B cell (primary cell): ENCODE measurements at regions of chr22 and their contacts with region 1.

Region 1: GRCh38 chr22:49970528-49971231 is 10.1 kb downstream of the PIM3 start:
- DNase-seq: peak; percentile 95
- ATAC-seq: peak; percentile 85
- H3K4me3 ChIP-seq: peak overlapping the region in 4 of 5 experiments; percentile 41 to 65 (median 55)
- H3K4me3 Mint-ChIP-seq: peak overlapping the region; percentile 84
- H3K27ac ChIP-seq: peak overlapping the region in 1 of 2 donors; percentile 40
- H3K27ac Mint-ChIP-seq: peak overlapping the region; percentile 96
- H3K4me1 ChIP-seq: peaks cover 43 to 56% of the 10 kb centered on the region in 2 donors
- H3K4me1 Mint-ChIP-seq: peaks cover 40% of the 10 kb centered on the region
- H3K27me3 ChIP-seq: no peaks in the 10 kb centered on the region
- H3K27me3 Mint-ChIP-seq: no peaks in the 10 kb centered on the region
- CTCF ChIP-seq: no peak

Region 2: DNA sequence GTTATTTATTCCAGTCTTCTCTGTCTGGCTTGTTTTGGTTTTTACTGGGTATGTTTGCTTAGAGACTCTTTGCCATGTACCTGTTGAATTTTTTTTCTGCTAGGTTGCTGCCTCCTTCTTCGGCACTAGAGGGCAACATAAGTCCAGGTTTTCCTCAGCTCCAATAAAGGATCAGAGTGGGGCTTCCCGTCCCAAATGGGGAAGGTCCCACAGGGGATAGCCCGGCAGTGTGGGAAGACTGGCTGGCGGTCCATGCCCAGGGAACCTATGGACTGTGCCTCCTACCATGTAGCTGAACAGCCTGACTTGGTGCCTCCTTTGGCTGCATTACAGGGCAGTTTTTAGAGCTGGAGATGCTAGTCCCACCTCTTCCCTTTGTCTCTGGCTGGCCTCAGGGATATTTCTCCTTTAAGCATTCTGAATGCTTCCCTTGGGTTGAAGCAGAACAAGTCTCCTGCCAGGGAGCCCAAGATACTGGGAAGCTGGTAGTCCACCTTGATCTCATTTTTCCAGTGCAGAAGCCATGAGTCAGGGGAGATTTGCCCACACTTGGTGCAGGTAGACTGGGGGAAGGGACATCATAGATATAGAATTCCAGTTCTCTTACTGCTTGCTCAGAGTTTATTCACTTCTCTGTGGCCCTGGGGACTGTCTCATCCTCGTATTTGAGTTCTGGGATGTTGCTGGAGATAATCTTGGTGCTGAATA is 203.2 kb before region 1 on chr22:
- CTCF ChIA-PET with region 1: no interaction called
- POLR2A ChIA-PET with region 1: no interaction called
- intact Hi-C with region 1: loop called (anchors 5 kb)
- DNase-seq: peak; percentile 65
- ATAC-seq: peak; percentile 59
- H3K4me3 ChIP-seq: no peak overlapping the region
- H3K4me3 Mint-ChIP-seq: no peak overlapping the region
- H3K27ac ChIP-seq: no peak overlapping the region
- H3K27ac Mint-ChIP-seq: no peak overlapping the region
- H3K4me1 ChIP-seq: no peaks in the 10 kb centered on the region
- H3K4me1 Mint-ChIP-seq: peaks cover 4% of the 10 kb centered on the region
- H3K27me3 ChIP-seq: no peaks in the 10 kb centered on the region
- H3K27me3 Mint-ChIP-seq: no peaks in the 10 kb centered on the region
- CTCF ChIP-seq: peak; percentile 79

Region 3: GRCh38 chr22:49852898-49853894 is 117.5 kb before region 1 on chr22 and contains the start of gene ZBED4:
- CTCF ChIA-PET with region 1: no interaction called
- POLR2A ChIA-PET with region 1: no interaction called
- intact Hi-C with region 1: loop called (anchors 5 kb)
- DNase-seq: peak; percentile 99
- ATAC-seq: peak; percentile 88
- H3K4me3 ChIP-seq: peak within 1 kb of the TSS; percentile 66 to 81 (median 77)
- H3K4me3 Mint-ChIP-seq: peak within 1 kb of the TSS; percentile 87
- H3K27ac ChIP-seq: peak within 1 kb of the TSS; percentile 73 to 90
- H3K27ac Mint-ChIP-seq: peak within 1 kb of the TSS; percentile 93
- H3K4me1 ChIP-seq: peaks cover 31 to 44% of the 10 kb centered on the region in 2 donors
- H3K4me1 Mint-ChIP-seq: peaks cover 43% of the 10 kb centered on the region
- H3K27me3 ChIP-seq: peaks cover 0 to 25% (median 14%) of the 10 kb centered on the region in 4 experiments
- H3K27me3 Mint-ChIP-seq: peaks cover 16% of the 10 kb centered on the region
- CTCF ChIP-seq: no peak
- total RNA-seq, gene ZBED4: 14.6 and 14.7 TPM in 2 replicates

Region 4: DNA sequence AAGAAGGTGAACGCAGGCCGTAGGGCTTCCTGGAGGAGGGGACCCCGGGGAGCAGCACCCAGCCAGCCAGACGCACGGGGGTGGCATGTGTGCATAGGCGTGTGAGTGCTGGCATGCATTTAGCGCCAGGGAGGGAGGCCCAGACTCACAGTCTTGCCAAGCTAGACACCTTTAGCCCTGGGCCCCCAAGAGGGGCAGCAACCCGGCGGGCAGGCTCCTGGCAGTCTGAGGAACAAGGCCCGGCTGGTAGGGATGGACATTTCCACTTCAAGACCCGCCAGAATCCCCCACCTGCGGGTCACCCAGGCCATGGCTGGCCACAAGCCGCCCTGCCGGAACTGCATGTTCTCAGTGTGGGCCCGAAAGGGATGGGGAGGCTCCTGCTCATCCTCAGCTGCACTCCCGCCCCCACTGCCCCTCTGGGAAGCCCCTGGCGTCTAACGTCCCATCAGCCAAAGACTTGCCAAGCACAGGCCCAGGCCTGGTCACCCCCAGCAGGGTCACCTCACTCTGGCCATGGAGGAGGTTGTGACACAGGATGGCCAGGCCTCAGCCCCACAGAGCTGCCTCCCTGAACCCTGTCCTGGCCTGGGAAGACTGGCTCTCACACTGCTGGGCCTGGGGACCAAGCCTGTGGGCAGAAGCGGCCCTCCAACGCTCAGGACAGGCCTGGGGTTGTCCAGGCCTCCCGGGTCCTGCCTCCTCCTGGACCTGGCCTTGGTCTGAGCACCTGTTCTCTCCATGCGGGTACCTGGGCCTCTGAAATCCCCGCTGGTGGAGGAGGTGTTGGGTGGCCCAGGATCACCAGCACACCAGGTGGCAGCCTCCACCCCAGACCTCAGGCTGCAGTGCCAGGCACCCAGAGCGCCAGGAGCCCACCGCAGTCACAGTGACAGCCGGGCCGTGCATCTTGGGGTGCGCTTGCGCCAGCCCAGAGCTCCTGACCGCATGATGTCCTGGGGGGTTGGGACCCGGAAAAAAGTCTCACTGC is 26.5 kb before region 1 on chr22:
- CTCF ChIA-PET with region 1: no interaction called
- POLR2A ChIA-PET with region 1: no interaction called
- intact Hi-C with region 1: no loop called
- DNase-seq: peak; percentile 42
- ATAC-seq: peak; percentile 15
- H3K4me3 ChIP-seq: no peak overlapping the region
- H3K4me3 Mint-ChIP-seq: no peak overlapping the region
- H3K27ac ChIP-seq: peak overlapping the region; percentile 70 to 80
- H3K27ac Mint-ChIP-seq: no peak overlapping the region
- H3K4me1 ChIP-seq: peaks cover 11 to 17% of the 10 kb centered on the region in 2 donors
- H3K4me1 Mint-ChIP-seq: peaks cover 9% of the 10 kb centered on the region
- H3K27me3 ChIP-seq: no peaks in the 10 kb centered on the region
- H3K27me3 Mint-ChIP-seq: no peaks in the 10 kb centered on the region
- CTCF ChIP-seq: no peak

Region 5: GRCh38 chr22:49960159-49961004 is 10.3 kb before region 1 on chr22 and contains the start of gene PIM3:
- CTCF ChIA-PET with region 1: interaction called, 3 read pairs
- POLR2A ChIA-PET with region 1: interaction called, 43 read pairs
- intact Hi-C with region 1: no loop called
- DNase-seq: peak; percentile 98
- ATAC-seq: peak; percentile 78
- H3K4me3 ChIP-seq: peak within 1 kb of the TSS; percentile 65 to 88 (median 77)
- H3K4me3 Mint-ChIP-seq: peak within 1 kb of the TSS; percentile 91
- H3K27ac ChIP-seq: peak within 1 kb of the TSS; percentile 85 to 94
- H3K27ac Mint-ChIP-seq: peak within 1 kb of the TSS; percentile 91
- H3K4me1 ChIP-seq: peaks cover 22 to 36% of the 10 kb centered on the region in 2 donors
- H3K4me1 Mint-ChIP-seq: peaks cover 38% of the 10 kb centered on the region
- H3K27me3 ChIP-seq: no peaks in the 10 kb centered on the region
- H3K27me3 Mint-ChIP-seq: no peaks in the 10 kb centered on the region
- CTCF ChIP-seq: no peak
- total RNA-seq, gene PIM3: 127 and 128 TPM in 2 replicates

Region 6: GRCh38 chr22:49992921-49993648 is 22.4 kb after region 1 on chr22:
- CTCF ChIA-PET with region 1: interaction called, 16 read pairs
- POLR2A ChIA-PET with region 1: interaction called, 4 read pairs
- intact Hi-C with region 1: no loop called
- DNase-seq: peak; percentile 82
- ATAC-seq: peak; percentile 96
- H3K4me3 ChIP-seq: no peak overlapping the region
- H3K4me3 Mint-ChIP-seq: peak overlapping the region; percentile 51
- H3K27ac ChIP-seq: no peak overlapping the region
- H3K27ac Mint-ChIP-seq: peak overlapping the region; percentile 82
- H3K4me1 ChIP-seq: peaks cover 11 to 24% of the 10 kb centered on the region in 2 donors
- H3K4me1 Mint-ChIP-seq: peaks cover 15% of the 10 kb centered on the region
- H3K27me3 ChIP-seq: no peaks in the 10 kb centered on the region
- H3K27me3 Mint-ChIP-seq: no peaks in the 10 kb centered on the region
- CTCF ChIP-seq: peak; percentile 87

Region 7: GRCh38 chr22:50085211-50085972 is 114.7 kb after region 1 on chr22 and contains the start of gene MLC1:
- CTCF ChIA-PET with region 1: no interaction called
- POLR2A ChIA-PET with region 1: no interaction called
- intact Hi-C with region 1: no loop called
- DNase-seq: peak; percentile 38
- ATAC-seq: no peak
- H3K4me3 ChIP-seq: peak within 1 kb of the TSS in 4 of 5 experiments; percentile 8 to 54 (median 32)
- H3K4me3 Mint-ChIP-seq: peak within 1 kb of the TSS; percentile 62
- H3K27ac ChIP-seq: no peak within 1 kb of the TSS
- H3K27ac Mint-ChIP-seq: no peak within 1 kb of the TSS
- H3K4me1 ChIP-seq: no peaks in the 10 kb centered on the region
- H3K4me1 Mint-ChIP-seq: peaks cover 3% of the 10 kb centered on the region
- H3K27me3 ChIP-seq: peaks cover 0 to 42% (median 8%) of the 10 kb centered on the region in 4 experiments
- H3K27me3 Mint-ChIP-seq: peaks cover 23% of the 10 kb centered on the region
- CTCF ChIP-seq: no peak
- total RNA-seq, gene MLC1: not detected in 2 replicates